Natural killer cell (primary cell): ENCODE measurements at regions of chr12 and their contacts with region 1.

Region 1: GRCh38 chr12:25269701-25270100 is 19.0 kb upstream of the KRAS start:
- DNase-seq: no peak
- ATAC-seq: no peak
- H3K4me3 ChIP-seq: no peak overlapping the region
- H3K4me3 Mint-ChIP-seq: no peak overlapping the region
- H3K27ac ChIP-seq: no peak overlapping the region
- H3K27ac Mint-ChIP-seq: peak overlapping the region in 1 of 2 donors; percentile 44
- H3K4me1 ChIP-seq: no peaks in the 10 kb centered on the region
- H3K4me1 Mint-ChIP-seq: peaks cover 9 to 12% of the 10 kb centered on the region in 2 donors
- H3K27me3 ChIP-seq: no peaks in the 10 kb centered on the region
- H3K27me3 Mint-ChIP-seq: no peaks in the 10 kb centered on the region
- CTCF ChIP-seq: no peak

Region 2: DNA sequence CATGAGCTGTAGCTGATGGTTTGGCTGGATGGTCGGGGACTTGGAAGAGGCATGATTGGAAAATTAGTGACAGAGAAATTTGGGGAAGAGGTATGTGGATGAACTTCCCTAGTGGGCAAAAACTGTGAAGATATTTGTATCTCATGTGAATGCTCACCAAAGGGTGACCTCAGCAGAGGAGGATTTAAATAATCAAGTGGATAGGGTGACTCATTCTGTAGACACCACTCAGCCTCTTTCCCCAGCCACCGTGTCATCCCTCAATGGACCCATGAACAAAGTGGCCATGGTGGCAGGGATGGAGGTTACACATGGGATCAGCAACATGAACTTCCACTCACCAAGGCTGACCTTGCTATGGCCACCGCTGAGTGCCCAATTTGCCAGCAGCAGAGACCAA is 41.8 kb after region 1 on chr12:
- intact Hi-C with region 1: loop called (anchors 5 kb)
- DNase-seq: no peak
- ATAC-seq: no peak
- H3K4me3 ChIP-seq: no peak overlapping the region
- H3K4me3 Mint-ChIP-seq: no peak overlapping the region
- H3K27ac ChIP-seq: no peak overlapping the region
- H3K27ac Mint-ChIP-seq: no peak overlapping the region
- H3K4me1 ChIP-seq: no peaks in the 10 kb centered on the region
- H3K4me1 Mint-ChIP-seq: no peaks in the 10 kb centered on the region
- H3K27me3 ChIP-seq: no peaks in the 10 kb centered on the region
- H3K27me3 Mint-ChIP-seq: no peaks in the 10 kb centered on the region
- CTCF ChIP-seq: no peak